CD4-positive, alpha-beta memory T cell (primary cell): ENCODE measurements at regions of chr19 and their contacts with region 1.

Region 1: DNA sequence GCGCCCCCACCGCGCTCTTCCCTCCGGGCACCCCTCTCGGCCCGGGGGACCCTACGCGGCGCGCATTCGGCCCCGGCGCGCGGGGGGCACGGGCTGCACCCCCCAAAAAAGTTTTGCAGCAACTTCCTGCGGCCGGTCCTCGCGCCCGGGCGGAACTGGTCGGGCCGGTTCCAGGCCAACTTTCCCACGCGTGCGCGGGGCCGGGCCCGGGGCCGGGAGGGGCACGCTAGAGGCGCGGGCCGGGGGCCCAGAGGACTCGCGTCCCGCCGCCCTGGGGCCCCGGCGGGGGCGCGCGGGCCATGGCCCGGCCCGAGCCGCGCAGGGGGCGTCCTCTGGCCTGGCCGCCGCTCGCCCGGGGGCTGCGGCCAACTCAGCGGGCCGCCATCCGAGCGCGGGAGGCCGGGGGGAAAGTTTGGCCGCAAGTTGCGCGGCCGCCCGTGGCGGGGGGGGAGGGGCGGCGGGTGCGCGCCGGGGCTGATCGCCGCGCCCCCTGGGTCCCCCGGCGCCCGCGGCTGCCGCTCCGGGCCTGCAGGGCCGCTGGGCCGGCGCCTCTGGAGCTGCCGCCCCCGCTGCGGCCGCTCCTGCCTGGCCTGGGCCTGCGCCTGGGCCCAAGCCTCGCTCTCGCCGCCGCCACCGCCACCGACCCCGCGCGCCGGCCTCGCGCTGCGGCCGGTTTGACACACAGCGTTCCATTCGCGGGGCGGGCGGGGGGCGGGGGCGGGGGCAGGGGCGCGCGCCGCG is at the start of gene NR2F6:
- DNase-seq: no peak
- H3K4me3 ChIP-seq: peak within 1 kb of the TSS in 1 of 2 donors; percentile 64
- H3K4me3 Mint-ChIP-seq: peak within 1 kb of the TSS; percentile 83 to 97 (median 86)
- H3K27ac ChIP-seq: peak within 1 kb of the TSS; percentile 42
- H3K27ac Mint-ChIP-seq: peak within 1 kb of the TSS in 5 of 7 donors; percentile 60 to 88 (median 79)
- H3K4me1 ChIP-seq: peaks cover 11% of the 10 kb centered on the region
- H3K4me1 Mint-ChIP-seq: peaks cover 0 to 4% (median 3%) of the 10 kb centered on the region in 4 donors
- H3K27me3 ChIP-seq: no peaks in the 10 kb centered on the region
- H3K27me3 Mint-ChIP-seq: no peaks in the 10 kb centered on the region
- total RNA-seq, gene NR2F6: 7.1 TPM

Region 2: DNA sequence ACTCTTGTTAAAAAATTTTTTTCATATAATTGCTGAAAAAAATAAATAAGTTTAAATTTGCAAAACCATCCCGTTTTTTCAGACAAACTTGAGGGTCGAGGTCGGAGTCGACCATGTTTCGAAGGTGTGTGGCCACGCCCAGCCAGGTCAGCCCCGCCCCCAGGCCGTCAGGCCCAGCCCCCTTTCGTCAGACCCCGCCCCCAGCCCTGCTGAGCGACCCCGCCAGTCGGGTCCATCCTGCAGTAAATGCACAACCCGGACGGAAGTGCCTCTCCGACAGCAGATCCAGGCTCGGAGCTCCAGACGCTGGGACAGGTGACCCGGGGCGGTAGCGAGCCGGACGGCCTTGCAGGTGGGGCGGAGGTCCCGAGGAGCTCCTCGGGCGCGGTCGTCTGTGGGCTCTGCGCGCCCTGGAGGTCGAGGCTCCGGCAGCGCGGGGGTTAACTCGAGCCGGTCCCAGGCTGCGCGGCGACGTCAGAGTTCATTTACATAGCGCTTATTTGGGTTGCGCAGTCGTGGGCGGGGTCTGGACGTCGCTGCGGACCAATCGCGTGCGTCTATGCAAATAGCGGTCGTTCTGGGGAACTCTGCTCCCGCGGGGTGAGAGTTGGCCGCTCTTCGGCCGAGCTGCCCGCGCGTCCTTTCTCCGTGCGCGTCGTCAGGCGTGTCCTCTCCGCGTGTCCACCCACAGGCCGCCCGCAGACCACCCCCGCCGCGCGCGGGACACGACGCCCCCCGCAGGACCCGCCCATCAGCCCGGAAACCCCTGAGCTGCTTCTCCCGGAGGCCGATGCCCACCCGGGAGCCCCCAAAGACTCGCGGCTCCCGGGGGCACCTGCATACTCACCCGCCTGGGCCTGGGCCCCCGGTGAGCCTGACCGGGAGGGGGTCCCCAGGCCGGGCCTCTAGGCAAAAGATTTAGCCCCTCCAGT is 19.1 kb before region 1 on chr19 and contains the start of gene OCEL1:
- CTCF ChIA-PET with region 1: no interaction called
- POLR2A ChIA-PET with region 1: interaction called, 9 read pairs
- intact Hi-C with region 1: loop called (anchors 1 kb)
- DNase-seq: peak; percentile 96 to 98 (median 97)
- H3K4me3 ChIP-seq: peak within 1 kb of the TSS; percentile 73 to 90
- H3K4me3 Mint-ChIP-seq: peak within 1 kb of the TSS; percentile 95 to 99 (median 95)
- H3K27ac ChIP-seq: peak within 1 kb of the TSS; percentile 73
- H3K27ac Mint-ChIP-seq: peak within 1 kb of the TSS; percentile 98 to 99 (median 98)
- H3K4me1 ChIP-seq: peaks cover 14% of the 10 kb centered on the region
- H3K4me1 Mint-ChIP-seq: peaks cover 4 to 19% (median 7%) of the 10 kb centered on the region in 4 donors
- H3K27me3 ChIP-seq: no peaks in the 10 kb centered on the region
- H3K27me3 Mint-ChIP-seq: no peaks in the 10 kb centered on the region
- total RNA-seq, gene OCEL1: 23.9 to 29.3 TPM

Region 3: DNA sequence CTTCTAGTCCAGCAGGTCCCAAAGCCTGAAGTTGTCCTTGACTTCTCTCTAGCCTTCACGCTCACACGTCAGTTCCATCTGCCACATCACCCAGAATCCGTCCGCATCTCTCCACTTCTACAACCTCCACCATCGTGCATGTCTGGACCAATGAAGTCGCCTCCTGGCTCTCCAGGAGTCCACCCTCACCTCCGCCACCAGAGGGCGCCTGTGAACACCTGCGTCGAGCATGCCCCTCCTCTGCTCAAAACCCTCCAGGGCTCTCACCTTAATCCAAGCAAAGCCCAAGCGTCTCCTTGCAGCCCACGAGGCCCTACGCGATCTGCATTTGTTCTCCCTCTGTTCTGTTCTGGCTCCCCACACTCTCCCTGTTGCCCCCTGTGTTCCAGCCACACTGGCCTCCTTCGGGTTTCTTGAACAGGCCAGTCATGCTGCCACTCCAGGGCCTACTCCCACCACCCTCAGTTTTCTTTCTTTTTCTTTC is 15.5 kb after region 1 on chr19:
- CTCF ChIA-PET with region 1: interaction called, 21 read pairs
- POLR2A ChIA-PET with region 1: no interaction called
- intact Hi-C with region 1: no loop called
- DNase-seq: peak; percentile 85 to 88 (median 87)
- H3K4me3 ChIP-seq: no peak overlapping the region
- H3K4me3 Mint-ChIP-seq: no peak overlapping the region
- H3K27ac ChIP-seq: no peak overlapping the region
- H3K27ac Mint-ChIP-seq: peak overlapping the region in 5 of 7 donors; percentile 1 to 82 (median 47)
- H3K4me1 ChIP-seq: peaks cover 14% of the 10 kb centered on the region
- H3K4me1 Mint-ChIP-seq: peaks cover 5 to 22% (median 16%) of the 10 kb centered on the region in 4 donors
- H3K27me3 ChIP-seq: no peaks in the 10 kb centered on the region
- H3K27me3 Mint-ChIP-seq: no peaks in the 10 kb centered on the region